ENCODE measurements at regions of chr9 and their contacts with region 1.

Region 1: DNA sequence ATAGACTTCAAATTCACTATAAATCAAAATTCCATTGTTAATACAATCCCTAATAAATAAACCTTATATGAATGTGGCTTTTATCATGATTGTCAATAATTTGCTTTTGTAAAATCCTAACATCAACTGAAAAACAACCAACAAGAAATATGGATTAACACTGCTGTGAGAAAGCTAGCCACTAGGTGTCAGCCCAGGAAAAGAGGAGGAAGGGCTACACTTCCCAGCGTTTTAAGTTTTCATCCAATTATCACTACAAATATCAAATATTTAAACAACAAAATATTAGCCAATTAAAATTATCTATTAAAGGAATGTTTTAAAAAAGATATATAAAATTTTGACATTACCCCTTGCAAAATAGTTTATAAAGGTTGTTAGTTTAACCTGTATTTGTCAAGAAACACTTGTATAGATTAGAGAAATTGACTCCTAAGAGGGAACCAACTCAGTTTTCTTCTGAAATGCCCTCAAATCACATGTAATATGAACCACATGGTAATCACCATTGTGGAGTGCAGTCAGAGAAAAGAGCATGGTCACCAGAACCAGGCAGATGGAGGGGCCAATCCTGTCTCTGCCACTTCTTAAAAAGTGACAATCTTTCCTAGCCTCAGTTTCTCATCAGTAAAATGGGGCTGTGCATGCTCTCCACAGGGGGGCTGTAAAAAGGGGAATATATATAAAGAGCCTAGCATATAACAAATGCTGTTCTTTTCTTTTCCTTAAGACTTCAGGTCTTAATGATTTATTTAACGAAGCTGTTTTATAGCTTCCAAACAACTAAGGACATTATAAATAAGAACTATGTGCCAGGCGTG is 188.2 kb downstream of the CRB2 start:
- DNase-seq: peak; percentile 33 to 44
- ATAC-seq: peak in 1 of 2 experiments; percentile 78; a peak in 3 of 6 replicates
- H3K4me3 ChIP-seq: no peak overlapping the region
- H3K27ac ChIP-seq: no peak overlapping the region
- H3K4me1 ChIP-seq: no peaks in the 10 kb centered on the region
- CTCF ChIP-seq: peak; percentile 98
- EP300 ChIP-seq: no peak
- POLR2A ChIP-seq: no peak
- RAD21 ChIP-seq: peak; percentile 93 to 97

Region 2: DNA sequence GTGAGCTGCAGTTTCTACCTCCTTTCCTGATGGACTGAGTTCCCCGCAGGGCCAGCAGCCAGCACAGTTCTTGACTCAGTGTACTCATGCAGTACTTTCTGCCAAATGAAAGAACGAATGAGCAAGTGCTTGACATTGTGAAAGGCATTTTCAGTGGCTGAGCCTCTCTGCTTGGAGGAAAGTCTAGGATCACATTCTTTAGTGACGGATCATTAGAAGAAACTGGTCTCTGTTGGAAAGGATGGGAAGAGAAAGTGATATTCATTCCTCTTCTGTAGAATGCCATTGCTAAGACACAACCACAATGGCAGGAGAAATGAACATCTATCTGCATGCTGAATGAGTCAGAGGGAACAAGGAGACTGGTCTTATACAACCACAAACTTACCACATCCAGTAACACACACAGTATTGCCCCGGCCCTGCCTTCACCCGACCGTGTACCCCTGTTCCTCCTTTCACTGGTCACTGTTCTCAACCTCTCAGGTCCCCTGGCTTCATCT is 18.7 kb after region 1 on chr9:
- CTCF ChIA-PET with region 1: interaction called, 10 read pairs
- POLR2A ChIA-PET with region 1: no interaction called
- DNase-seq: no peak
- ATAC-seq: no peak
- H3K4me3 ChIP-seq: no peak overlapping the region
- H3K27ac ChIP-seq: no peak overlapping the region
- H3K4me1 ChIP-seq: no peaks in the 10 kb centered on the region
- CTCF ChIP-seq: no peak
- EP300 ChIP-seq: no peak
- POLR2A ChIP-seq: no peak
- RAD21 ChIP-seq: no peak